Gastrocnemius medialis (tissue), 4 donors: ENCODE measurements at regions of chr2 and their contacts with region 1.

Region 1: GRCh38 chr2:159124441-159124911 is 156.0 kb downstream of the TANC1 start:
- DNase-seq: no peak
- ATAC-seq: no peak
- H3K4me3 ChIP-seq: no peak overlapping the region
- H3K27ac ChIP-seq: no peak overlapping the region
- H3K4me1 ChIP-seq: peaks cover 0 to 5% of the 10 kb centered on the region in 2 donors
- H3K27me3 ChIP-seq: no peaks in the 10 kb centered on the region
- CTCF ChIP-seq: no peak
- POLR2A ChIP-seq: no peak

Region 2: GRCh38 chr2:158893026-158893425 is 231.4 kb before region 1 on chr2:
- in situ Hi-C with region 1: loop called in 2 of 4 experiments (anchors 5 kb)
- intact Hi-C with region 1: no loop called
- DNase-seq: no peak
- ATAC-seq: no peak
- H3K4me3 ChIP-seq: no peak overlapping the region
- H3K27ac ChIP-seq: no peak overlapping the region
- H3K4me1 ChIP-seq: no peaks in the 10 kb centered on the region
- H3K27me3 ChIP-seq: no peaks in the 10 kb centered on the region
- CTCF ChIP-seq: no peak
- POLR2A ChIP-seq: no peak

Region 3: DNA sequence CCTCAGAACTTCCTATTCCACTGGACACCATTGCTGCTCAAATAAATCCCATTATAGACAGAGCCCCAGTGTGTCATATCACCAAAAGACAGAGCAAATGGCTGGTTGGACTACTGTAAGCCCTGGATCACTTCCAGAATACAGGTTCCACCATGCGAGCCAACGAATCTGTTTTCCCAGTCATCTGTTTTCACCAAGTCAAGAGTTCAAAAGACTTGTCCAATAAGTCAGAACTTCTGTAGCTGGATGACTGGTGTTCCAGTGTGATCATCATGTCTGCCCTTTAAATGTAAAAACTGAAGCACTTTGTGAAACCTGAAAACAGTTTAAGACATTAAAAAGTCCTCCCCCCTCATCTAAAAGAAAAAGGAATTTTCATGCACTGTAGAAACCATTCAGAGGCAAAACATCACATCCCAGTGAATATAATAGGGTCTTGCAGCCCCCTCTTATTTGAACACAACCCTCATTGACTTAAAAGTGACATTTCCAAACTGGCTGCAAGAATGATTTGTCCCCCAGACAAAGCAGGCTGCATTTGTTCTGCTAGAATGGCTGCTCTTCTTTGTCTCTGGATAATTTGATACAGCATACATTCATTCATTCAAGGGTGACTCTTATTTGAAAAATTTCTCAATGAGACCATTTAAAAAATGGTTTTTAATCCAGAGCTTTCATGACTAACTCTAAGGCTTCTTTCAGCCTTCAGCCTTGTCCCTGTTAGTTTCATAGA is 220.6 kb before region 1 on chr2:
- in situ Hi-C with region 1: loop called (anchors 5 kb)
- intact Hi-C with region 1: loop called (anchors 1 kb)
- DNase-seq: no peak
- ATAC-seq: no peak
- H3K4me3 ChIP-seq: no peak overlapping the region
- H3K27ac ChIP-seq: no peak overlapping the region
- H3K4me1 ChIP-seq: no peaks in the 10 kb centered on the region
- H3K27me3 ChIP-seq: no peaks in the 10 kb centered on the region
- CTCF ChIP-seq: no peak
- POLR2A ChIP-seq: no peak